PC-9 (cell line): ENCODE measurements at regions of chr17 and their contacts with region 1.

Region 1: GRCh38 chr17:5260554-5260953 is 21.5 kb upstream of the RABEP1 start:
- DNase-seq: peak; percentile 68 to 94
- H3K4me3 ChIP-seq: no peak overlapping the region
- H3K27ac ChIP-seq: 0 out of 2 replicates have a peak overlapping the region, but pooled peaks have one; percentile 21
- H3K4me1 ChIP-seq: peaks cover 21% of the 10 kb centered on the region
- H3K27me3 ChIP-seq: no peaks in the 10 kb centered on the region
- CTCF ChIP-seq: no peak

Region 2: DNA sequence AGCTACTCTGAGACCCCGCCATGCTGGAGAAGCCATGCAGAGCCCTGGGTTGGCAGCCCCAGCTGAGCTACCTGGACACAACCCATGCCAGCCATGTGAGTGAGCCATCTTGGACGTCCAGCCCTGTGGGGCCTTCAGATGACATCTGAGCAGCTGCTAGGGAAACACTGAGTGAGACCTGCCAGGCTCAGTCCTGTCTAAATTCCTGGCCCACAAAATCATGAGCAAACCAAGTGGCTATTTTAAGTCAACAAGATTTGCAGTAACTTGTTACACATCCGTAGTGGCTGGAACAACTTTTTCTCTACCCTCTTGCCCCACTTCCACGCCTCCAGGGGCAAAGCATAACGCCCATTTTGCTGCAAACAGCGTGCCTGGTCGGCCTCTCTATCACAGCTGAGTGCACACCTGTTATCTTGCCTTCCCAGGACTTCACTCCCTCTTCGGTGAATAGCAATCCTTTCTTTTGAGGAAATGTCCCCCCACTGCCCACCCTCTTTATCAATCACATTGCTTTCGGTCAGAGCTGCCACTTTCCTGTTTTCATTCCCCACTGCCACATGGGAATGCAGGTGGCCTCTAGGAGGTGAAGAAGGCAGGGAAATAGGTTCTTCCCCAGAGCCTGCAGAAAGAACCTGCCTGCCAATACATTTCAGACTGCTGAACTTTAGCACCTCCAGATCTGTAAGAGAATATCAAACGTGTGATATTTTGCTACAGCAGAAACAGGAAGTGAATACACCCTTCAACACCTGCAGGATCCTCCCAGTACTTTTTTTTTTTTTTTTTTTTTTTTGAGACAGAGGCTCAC is 18.5 kb before region 1 on chr17:
- CTCF ChIA-PET with region 1: no interaction called
- POLR2A ChIA-PET with region 1: no interaction called
- intact Hi-C with region 1: no loop called
- DNase-seq: no peak
- H3K4me3 ChIP-seq: no peak overlapping the region
- H3K27ac ChIP-seq: no peak overlapping the region
- H3K4me1 ChIP-seq: no peaks in the 10 kb centered on the region
- H3K27me3 ChIP-seq: no peaks in the 10 kb centered on the region
- CTCF ChIP-seq: no peak

Region 3: GRCh38 chr17:5281814-5282653 is 21.5 kb after region 1 on chr17 and contains the start of gene RABEP1:
- CTCF ChIA-PET with region 1: no interaction called
- POLR2A ChIA-PET with region 1: no interaction called
- intact Hi-C with region 1: loop called (anchors 2 kb)
- DNase-seq: peak; percentile 53 to 94
- H3K4me3 ChIP-seq: peak within 1 kb of the TSS; percentile 69
- H3K27ac ChIP-seq: no peak within 1 kb of the TSS
- H3K4me1 ChIP-seq: peaks cover 16% of the 10 kb centered on the region
- H3K27me3 ChIP-seq: no peaks in the 10 kb centered on the region
- CTCF ChIP-seq: no peak
- total RNA-seq, gene RABEP1: 41.9 and 53.0 TPM in 2 replicates

Region 4: DNA sequence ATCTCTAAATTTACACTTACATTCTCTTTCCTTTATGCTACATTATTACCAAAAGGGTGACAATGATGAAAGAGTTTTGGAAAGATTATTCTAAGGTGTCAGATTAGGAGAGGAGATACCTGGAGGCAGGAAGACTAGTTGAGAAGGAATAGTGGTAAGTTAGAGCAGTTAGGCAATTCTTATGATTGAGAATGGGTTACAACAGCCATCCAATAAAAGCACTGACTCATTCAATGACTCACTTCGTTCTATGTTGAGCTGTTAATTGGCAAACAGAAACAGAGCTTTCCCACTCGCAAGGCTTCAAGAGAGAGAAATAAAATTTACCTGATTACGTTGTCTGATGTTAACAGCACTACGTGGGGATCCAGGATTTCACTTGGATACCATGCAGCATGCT is 153.1 kb after region 1 on chr17:
- CTCF ChIA-PET with region 1: no interaction called
- POLR2A ChIA-PET with region 1: interaction called, 11 read pairs
- intact Hi-C with region 1: no loop called
- DNase-seq: peak in 1 of 2 experiments; percentile 94
- H3K4me3 ChIP-seq: 0 out of 2 replicates have a peak overlapping the region, but pooled peaks have one; percentile 10
- H3K27ac ChIP-seq: peak overlapping the region; percentile 94
- H3K4me1 ChIP-seq: peaks cover 45% of the 10 kb centered on the region
- H3K27me3 ChIP-seq: no peaks in the 10 kb centered on the region
- CTCF ChIP-seq: no peak